Activated T-helper 1 cell treated with anti-CD3 and anti-CD28 coated beads, Interleukin-12 subunit alpha, Interleukin-12 subunit beta, Interleukin-2, Interleukin-4 antibody, amounts not matched to agents 30 ng/mL and 10 ng/mL and 1 ng/mL, durations not matched to agents 14 hours and 24 hours and 36 hours (primary cell): ENCODE measurements at regions of chr14 and their contacts with region 1.

Region 1: GRCh38 chr14:105351920-105352851 is 37.6 kb downstream of the PACS2 start:
- DNase-seq: peak; percentile 82
- H3K4me3 Mint-ChIP-seq: no peak overlapping the region
- H3K27ac Mint-ChIP-seq: no peak overlapping the region
- H3K4me1 Mint-ChIP-seq: peaks cover 4% of the 10 kb centered on the region
- H3K27me3 Mint-ChIP-seq: no peaks in the 10 kb centered on the region

Region 2: DNA sequence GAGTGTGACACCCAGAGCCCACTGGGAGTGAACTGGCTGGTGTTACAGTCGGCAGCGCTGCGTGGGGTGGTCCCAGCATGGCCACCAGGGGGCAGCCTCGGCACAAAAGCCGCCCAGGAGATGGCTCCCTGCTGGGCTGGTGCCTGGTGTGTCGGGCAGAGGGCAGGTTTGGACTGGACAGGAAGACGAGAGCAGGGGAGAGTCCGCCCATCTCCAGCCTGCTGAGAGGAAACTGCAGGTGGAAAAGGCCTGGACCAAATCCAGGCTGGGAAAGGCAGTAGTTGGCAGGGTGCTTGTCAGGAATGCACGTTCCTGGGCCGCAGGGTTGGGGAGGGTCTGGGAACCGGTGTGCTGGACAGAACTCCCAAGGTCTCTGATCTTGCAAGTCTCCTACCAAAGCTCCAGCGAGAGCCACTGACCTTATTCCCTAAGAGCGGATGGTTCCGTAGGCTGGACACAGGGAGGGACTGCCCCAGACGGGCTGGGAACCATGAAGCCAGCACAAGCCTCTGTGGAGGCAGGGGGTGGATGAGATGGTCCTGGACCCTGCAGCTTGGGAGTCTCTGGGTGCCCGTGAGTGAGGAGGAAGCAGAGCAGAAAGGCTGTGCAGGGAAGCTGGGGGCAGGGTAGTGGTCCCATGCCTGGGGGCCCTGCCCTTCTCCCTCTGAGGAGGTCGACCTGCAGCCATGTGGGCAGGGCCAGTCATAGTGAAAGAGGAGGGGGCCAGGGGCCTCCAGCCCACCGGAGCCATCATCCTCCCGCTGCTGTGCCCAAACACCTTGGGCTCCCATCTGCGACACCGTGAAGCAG is 375.8 kb before region 1 on chr14:
- intact Hi-C with region 1: loop called (anchors 5 kb)
- DNase-seq: peak; percentile 77
- H3K4me3 Mint-ChIP-seq: peak overlapping the region; percentile 64
- H3K27ac Mint-ChIP-seq: peak overlapping the region; percentile 35
- H3K4me1 Mint-ChIP-seq: peaks cover 11% of the 10 kb centered on the region
- H3K27me3 Mint-ChIP-seq: peaks cover 24% of the 10 kb centered on the region

Region 3: GRCh38 chr14:105203057-105203531 is 149.1 kb before region 1 on chr14:
- intact Hi-C with region 1: loop called (anchors 1 kb)
- DNase-seq: peak; percentile 55
- H3K4me3 Mint-ChIP-seq: no peak overlapping the region
- H3K27ac Mint-ChIP-seq: no peak overlapping the region
- H3K4me1 Mint-ChIP-seq: peaks cover 5% of the 10 kb centered on the region
- H3K27me3 Mint-ChIP-seq: no peaks in the 10 kb centered on the region

Region 4: GRCh38 chr14:105314287-105315200 is 37.6 kb before region 1 on chr14 and contains the start of gene PACS2:
- intact Hi-C with region 1: loop called (anchors 2 kb)
- DNase-seq: peak; percentile 78
- H3K4me3 Mint-ChIP-seq: peak within 1 kb of the TSS; percentile 90
- H3K27ac Mint-ChIP-seq: peak within 1 kb of the TSS; percentile 80
- H3K4me1 Mint-ChIP-seq: peaks cover 21% of the 10 kb centered on the region
- H3K27me3 Mint-ChIP-seq: peaks cover 11% of the 10 kb centered on the region
- total RNA-seq, gene PACS2: 28.2 and 32.3 TPM in 2 replicates